Activated naive CD4-positive, alpha-beta T cell treated with anti-CD3 and anti-CD28 coated beads, Interleukin-2, amount 10 ng/mL, durations not matched to agents 7 days and 5 days (primary cell): ENCODE measurements at regions of chr10 and their contacts with region 1.

Region 1: GRCh38 chr10:114526504-114527238 is 122.4 kb upstream of the AFAP1L2 start:
- DNase-seq: peak; percentile 95
- H3K4me3 Mint-ChIP-seq: peak overlapping the region; percentile 95
- H3K27ac Mint-ChIP-seq: peak overlapping the region; percentile 98
- H3K4me1 Mint-ChIP-seq: peaks cover 64% of the 10 kb centered on the region
- H3K27me3 Mint-ChIP-seq: peaks cover 4% of the 10 kb centered on the region

Region 2: GRCh38 chr10:114499630-114500190 is 27.0 kb before region 1 on chr10:
- CTCF ChIA-PET with region 1: interaction called, 13 read pairs
- DNase-seq: peak; percentile 73
- H3K4me3 Mint-ChIP-seq: peak overlapping the region; percentile 31
- H3K27ac Mint-ChIP-seq: peak overlapping the region; percentile 92
- H3K4me1 Mint-ChIP-seq: peaks cover 89% of the 10 kb centered on the region
- H3K27me3 Mint-ChIP-seq: no peaks in the 10 kb centered on the region

Region 3: DNA sequence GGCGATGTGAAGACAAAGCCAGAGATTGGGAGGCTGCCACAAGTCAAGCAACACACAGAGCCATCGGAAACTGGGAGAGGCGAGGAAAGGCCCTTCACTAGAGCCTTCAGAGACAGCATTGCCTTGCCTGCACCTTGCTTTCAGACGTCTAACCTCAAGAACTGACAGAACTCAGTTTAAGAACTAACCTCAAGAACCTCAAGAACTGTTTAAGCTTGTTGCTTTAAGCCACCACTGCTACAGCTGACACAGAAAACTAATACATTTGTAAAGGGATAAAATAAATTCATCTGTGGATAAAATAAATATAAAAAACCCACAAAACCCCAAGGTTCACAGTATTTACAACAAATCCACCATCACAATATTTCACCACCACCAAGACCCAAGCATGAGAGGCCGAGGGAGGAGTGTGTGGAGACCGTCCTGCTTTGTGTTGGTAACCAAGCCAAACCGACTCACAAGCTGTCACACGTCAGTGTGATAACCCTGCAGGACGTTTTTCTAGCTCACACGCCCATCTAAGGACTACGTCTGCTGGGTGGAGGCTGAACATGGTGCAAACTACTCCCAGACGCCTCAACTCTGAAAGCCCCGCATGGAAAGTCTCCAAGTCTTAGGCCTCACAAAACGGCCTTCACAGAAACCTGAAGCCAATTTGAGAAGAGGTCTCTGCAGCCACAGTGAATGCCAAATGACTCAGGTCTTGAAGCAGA is 14.6 kb after region 1 on chr10:
- CTCF ChIA-PET with region 1: interaction called, 184 read pairs
- DNase-seq: peak; percentile 82
- H3K4me3 Mint-ChIP-seq: peak overlapping the region; percentile 47
- H3K27ac Mint-ChIP-seq: peak overlapping the region; percentile 100
- H3K4me1 Mint-ChIP-seq: peaks cover 96% of the 10 kb centered on the region
- H3K27me3 Mint-ChIP-seq: no peaks in the 10 kb centered on the region

Region 4: DNA sequence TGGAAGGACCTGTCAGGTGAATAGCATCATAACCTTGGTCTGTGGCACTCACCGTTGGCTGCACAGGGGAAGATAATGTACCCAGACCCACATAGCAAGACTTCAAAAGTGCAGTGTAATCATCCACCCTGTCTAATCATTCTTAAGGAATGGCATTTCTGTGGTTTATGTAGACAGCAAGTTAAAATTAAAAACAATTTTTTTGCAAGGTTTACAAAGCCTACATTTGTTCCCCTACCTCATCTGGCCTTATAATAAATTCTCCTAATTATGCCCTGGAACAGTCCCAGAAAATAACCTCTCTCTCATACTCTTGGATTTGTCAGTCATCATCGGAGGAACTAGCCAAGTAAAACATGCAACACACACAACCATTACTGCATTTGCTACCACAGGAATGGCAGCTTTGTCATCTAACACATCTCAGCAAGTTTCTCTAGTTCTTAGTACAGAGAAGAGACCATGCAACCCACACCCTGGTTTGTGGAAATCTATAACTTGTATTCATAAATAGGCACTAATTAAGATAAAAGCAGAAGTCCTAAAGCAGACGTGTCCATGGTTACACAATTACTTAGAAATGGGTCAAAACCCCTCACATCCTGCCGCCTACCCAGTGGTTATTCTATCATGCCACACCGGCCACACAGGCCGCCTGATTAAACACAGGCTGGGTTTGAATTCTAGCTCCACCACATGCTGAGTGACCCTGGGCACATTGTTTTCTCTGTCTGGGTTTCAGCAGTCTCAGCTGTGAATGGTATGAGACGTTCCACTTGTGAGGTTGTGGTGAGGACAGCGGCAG is 112.4 kb after region 1 on chr10:
- CTCF ChIA-PET with region 1: no interaction called
- DNase-seq: no peak
- H3K4me3 Mint-ChIP-seq: no peak overlapping the region
- H3K27ac Mint-ChIP-seq: no peak overlapping the region
- H3K4me1 Mint-ChIP-seq: no peaks in the 10 kb centered on the region
- H3K27me3 Mint-ChIP-seq: peaks cover 19% of the 10 kb centered on the region